ENCODE measurements at regions of chr6 and their contacts with region 1.

Region 1: DNA sequence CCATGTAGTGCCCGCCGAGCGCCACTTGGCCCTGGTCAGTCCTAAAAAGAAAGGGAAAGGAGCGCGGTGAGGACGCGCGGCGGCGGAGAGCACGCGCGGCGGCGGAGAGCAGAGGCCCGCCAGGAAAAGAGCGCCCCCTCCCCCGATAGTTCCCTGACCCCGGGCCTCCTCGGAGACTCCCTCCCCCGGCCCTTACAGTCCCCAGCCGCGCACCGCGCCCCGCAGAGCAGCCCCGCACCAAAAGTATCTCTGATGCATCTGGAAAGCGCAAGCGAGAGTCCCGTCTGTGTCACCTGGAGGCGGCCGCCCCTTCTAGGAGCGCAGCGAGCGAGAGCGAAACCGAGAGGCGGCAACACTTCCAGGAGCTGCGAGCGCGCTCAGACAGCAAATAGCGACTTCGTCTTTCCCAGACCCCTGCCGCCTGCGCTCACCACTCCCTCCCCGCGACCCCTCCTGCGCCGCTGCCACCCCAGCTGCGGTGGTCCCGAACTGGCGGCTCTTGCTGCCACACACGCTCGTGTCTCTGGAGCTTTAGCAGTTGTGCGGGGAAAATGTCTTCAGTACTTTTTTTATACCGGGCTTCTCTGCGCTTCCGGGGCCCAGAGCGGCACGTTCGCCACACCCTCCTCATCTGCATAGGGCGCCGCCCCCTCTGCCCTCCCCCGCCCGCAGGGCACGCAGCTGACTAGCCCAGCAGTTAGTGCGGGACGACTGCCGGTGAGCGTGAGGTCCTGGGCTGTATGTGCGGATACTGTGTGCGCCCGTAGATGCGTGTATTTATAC is at the start of gene TENT5A:
- DNase-seq: peak; percentile 88
- ATAC-seq: peak; percentile 77
- H3K4me3 ChIP-seq: peak within 1 kb of the TSS; percentile 92
- H3K27ac ChIP-seq: peak within 1 kb of the TSS; percentile 94
- H3K4me1 ChIP-seq: peaks cover 7% of the 10 kb centered on the region
- H3K27me3 ChIP-seq: no peaks in the 10 kb centered on the region
- CTCF ChIP-seq: no peak; the same call in 1 of the 2 replicates
- POLR2A ChIP-seq: no peak; the same call in 1 of the 2 replicates
- RAD21 ChIP-seq: no peak; the same call in 1 of the 2 replicates
- total RNA-seq, gene TENT5A: 10.8 and 16.9 TPM in 2 replicates

Region 2: GRCh38 chr6:80133020-80133419 is 1619.3 kb before region 1 on chr6:
- CTCF ChIA-PET with region 1: no interaction called
- POLR2A ChIA-PET with region 1: interaction called, 5 read pairs
- dilution Hi-C with region 1: no loop called
- in situ Hi-C with region 1: loop called (anchors 25 kb)
- intact Hi-C with region 1: loop called (anchors 10 kb)
- DNase-seq: peak; percentile 72
- ATAC-seq: no peak
- H3K4me3 ChIP-seq: no peak overlapping the region
- H3K27ac ChIP-seq: no peak overlapping the region
- H3K4me1 ChIP-seq: no peaks in the 10 kb centered on the region; the same call in 1 of the 2 replicates
- H3K27me3 ChIP-seq: no peaks in the 10 kb centered on the region
- CTCF ChIP-seq: peak; percentile 59
- POLR2A ChIP-seq: no peak
- RAD21 ChIP-seq: peak; percentile 76

Region 3: GRCh38 chr6:80425089-80425823 is 1327.1 kb before region 1 on chr6:
- CTCF ChIA-PET with region 1: no interaction called
- POLR2A ChIA-PET with region 1: no interaction called
- dilution Hi-C with region 1: no loop called
- in situ Hi-C with region 1: no loop called
- intact Hi-C with region 1: loop called (anchors 10 kb)
- DNase-seq: peak; percentile 99
- ATAC-seq: peak; percentile 98
- H3K4me3 ChIP-seq: no peak overlapping the region
- H3K27ac ChIP-seq: peak overlapping the region; percentile 90; the same call in 1 of the 2 replicates
- H3K4me1 ChIP-seq: peaks cover 7% of the 10 kb centered on the region
- H3K27me3 ChIP-seq: no peaks in the 10 kb centered on the region
- CTCF ChIP-seq: peak; percentile 24; the same call in 1 of the 2 replicates
- POLR2A ChIP-seq: no peak
- RAD21 ChIP-seq: peak; percentile 16; the same call in 1 of the 2 replicates

Region 4: GRCh38 chr6:80969439-80969838 is 782.9 kb before region 1 on chr6:
- CTCF ChIA-PET with region 1: no interaction called
- POLR2A ChIA-PET with region 1: no interaction called
- dilution Hi-C with region 1: no loop called
- in situ Hi-C with region 1: no loop called
- intact Hi-C with region 1: loop called (anchors 10 kb)
- DNase-seq: peak; percentile 19
- ATAC-seq: peak; percentile 53; the same call in 1 of the 2 replicates
- H3K4me3 ChIP-seq: no peak overlapping the region
- H3K27ac ChIP-seq: no peak overlapping the region
- H3K4me1 ChIP-seq: peaks cover 2% of the 10 kb centered on the region; the same call in 1 of the 2 replicates
- H3K27me3 ChIP-seq: no peaks in the 10 kb centered on the region
- CTCF ChIP-seq: no peak
- POLR2A ChIP-seq: no peak
- RAD21 ChIP-seq: no peak

Region 5: GRCh38 chr6:81553216-81553615 is 199.1 kb before region 1 on chr6:
- CTCF ChIA-PET with region 1: no interaction called
- POLR2A ChIA-PET with region 1: no interaction called
- dilution Hi-C with region 1: no loop called
- in situ Hi-C with region 1: no loop called
- intact Hi-C with region 1: loop called (anchors 2 kb)
- DNase-seq: peak; percentile 64
- ATAC-seq: peak; percentile 77
- H3K4me3 ChIP-seq: no peak overlapping the region
- H3K27ac ChIP-seq: no peak overlapping the region
- H3K4me1 ChIP-seq: peaks cover 4% of the 10 kb centered on the region; the same call in 1 of the 2 replicates
- H3K27me3 ChIP-seq: no peaks in the 10 kb centered on the region
- CTCF ChIP-seq: no peak
- POLR2A ChIP-seq: no peak
- RAD21 ChIP-seq: no peak

Region 6: GRCh38 chr6:81997091-81997926 is 245.0 kb after region 1 on chr6:
- CTCF ChIA-PET with region 1: no interaction called
- POLR2A ChIA-PET with region 1: no interaction called
- dilution Hi-C with region 1: no loop called
- in situ Hi-C with region 1: no loop called
- intact Hi-C with region 1: loop called (anchors 5 kb)
- DNase-seq: peak; percentile 88
- ATAC-seq: peak; percentile 73
- H3K4me3 ChIP-seq: no peak overlapping the region
- H3K27ac ChIP-seq: peak overlapping the region; percentile 61
- H3K4me1 ChIP-seq: peaks cover 19% of the 10 kb centered on the region
- H3K27me3 ChIP-seq: no peaks in the 10 kb centered on the region
- CTCF ChIP-seq: no peak
- POLR2A ChIP-seq: 0 out of 2 replicates have a peak, but pooled peaks have one; percentile 20
- RAD21 ChIP-seq: no peak

Measured in IMR-90 (cell line).